ENCODE measurements at regions of chr22 and their contacts with region 1.

Region 1: DNA sequence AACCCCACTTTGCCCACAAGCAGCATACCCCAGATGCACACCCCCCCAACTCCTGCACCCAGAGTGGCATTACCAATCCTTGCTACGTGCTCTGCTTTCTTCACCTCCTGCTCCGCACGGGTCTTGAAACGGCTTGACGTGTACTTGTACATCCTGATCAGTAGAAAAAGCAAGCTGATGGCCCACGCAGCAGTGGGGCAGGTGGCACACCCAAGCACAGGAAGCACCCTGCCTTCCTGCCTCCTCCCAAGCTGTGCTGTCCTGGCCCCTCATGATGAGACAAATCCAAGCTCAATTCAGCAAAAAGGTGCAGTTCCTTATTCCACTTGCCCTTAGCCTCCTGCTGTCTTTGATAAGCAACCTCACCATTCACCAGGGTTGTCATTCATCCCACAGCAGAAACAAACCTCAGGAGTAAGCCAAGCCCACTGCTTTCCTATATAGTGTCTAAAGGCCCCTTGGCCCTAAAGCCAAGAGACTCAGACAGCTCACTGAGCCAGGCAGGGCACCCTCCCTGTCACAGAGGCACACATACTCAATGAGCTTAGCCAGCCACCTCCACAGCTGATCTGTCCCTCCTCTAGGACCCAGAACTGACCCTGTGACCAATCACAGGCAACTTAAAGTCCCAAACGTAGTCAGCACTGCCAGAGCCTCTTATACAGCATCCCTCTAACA is 27.8 kb downstream of the MORC2 start:
- DNase-seq: no peak
- ATAC-seq: no peak
- H3K4me3 ChIP-seq: no peak overlapping the region
- H3K27ac ChIP-seq: no peak overlapping the region
- H3K4me1 ChIP-seq: no peaks in the 10 kb centered on the region
- H3K27me3 ChIP-seq: no peaks in the 10 kb centered on the region
- CTCF ChIP-seq: no peak
- POLR2A ChIP-seq: no peak
- RAD21 ChIP-seq: no peak

Region 2: GRCh38 chr22:30890686-30891442 is 50.0 kb before region 1 on chr22:
- CTCF ChIA-PET with region 1: no interaction called
- POLR2A ChIA-PET with region 1: no interaction called
- dilution Hi-C with region 1: no loop called
- in situ Hi-C with region 1: no loop called
- intact Hi-C with region 1: no loop called
- DNase-seq: peak; percentile 10
- ATAC-seq: peak; percentile 97
- H3K4me3 ChIP-seq: no peak overlapping the region
- H3K27ac ChIP-seq: no peak overlapping the region
- H3K4me1 ChIP-seq: no peaks in the 10 kb centered on the region
- H3K27me3 ChIP-seq: no peaks in the 10 kb centered on the region
- CTCF ChIP-seq: peak; percentile 63
- POLR2A ChIP-seq: no peak
- RAD21 ChIP-seq: peak; percentile 63

Region 3: DNA sequence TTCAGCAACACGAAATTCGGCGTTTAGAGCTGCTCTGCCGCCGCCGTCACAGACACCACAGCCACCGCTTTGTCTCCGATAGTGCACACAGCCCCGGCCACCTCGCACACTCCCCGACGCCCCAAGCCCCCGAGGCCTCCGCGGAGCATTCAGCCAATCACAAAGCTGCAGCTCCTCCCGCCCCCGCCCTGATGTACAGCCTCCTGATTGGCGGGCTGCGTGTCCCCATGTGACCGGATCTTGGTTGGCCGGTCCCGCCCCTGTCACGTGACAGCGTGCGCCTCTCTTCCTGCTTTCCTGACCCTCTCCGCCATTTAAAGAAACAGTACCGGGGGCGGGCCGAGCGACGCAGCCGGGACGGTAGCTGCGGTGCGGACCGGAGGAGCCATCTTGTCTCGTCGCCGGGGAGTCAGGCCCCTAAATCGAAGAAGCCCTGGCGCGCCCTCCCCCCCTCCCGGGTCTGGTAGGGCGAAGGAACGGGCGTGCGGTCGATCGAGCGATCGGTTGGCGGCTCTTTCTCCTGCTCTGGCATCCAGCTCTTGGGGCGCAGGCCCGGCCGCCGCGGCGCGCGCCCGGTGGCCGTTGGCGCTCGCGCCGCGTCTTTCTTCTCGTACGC is 28.2 kb after region 1 on chr22 and contains the start of gene TUG1:
- CTCF ChIA-PET with region 1: no interaction called
- POLR2A ChIA-PET with region 1: interaction called, 14 read pairs
- dilution Hi-C with region 1: no loop called
- in situ Hi-C with region 1: no loop called
- intact Hi-C with region 1: no loop called
- DNase-seq: peak; percentile 98
- ATAC-seq: peak; percentile 95
- H3K4me3 ChIP-seq: peak within 1 kb of the TSS; percentile 68
- H3K27ac ChIP-seq: peak within 1 kb of the TSS; percentile 97
- H3K4me1 ChIP-seq: peaks cover 10% of the 10 kb centered on the region
- H3K27me3 ChIP-seq: no peaks in the 10 kb centered on the region
- CTCF ChIP-seq: no peak
- POLR2A ChIP-seq: peak; percentile 88
- RAD21 ChIP-seq: no peak
- total RNA-seq, gene TUG1: 63.3 and 68.8 TPM in 2 replicates

Region 4: DNA sequence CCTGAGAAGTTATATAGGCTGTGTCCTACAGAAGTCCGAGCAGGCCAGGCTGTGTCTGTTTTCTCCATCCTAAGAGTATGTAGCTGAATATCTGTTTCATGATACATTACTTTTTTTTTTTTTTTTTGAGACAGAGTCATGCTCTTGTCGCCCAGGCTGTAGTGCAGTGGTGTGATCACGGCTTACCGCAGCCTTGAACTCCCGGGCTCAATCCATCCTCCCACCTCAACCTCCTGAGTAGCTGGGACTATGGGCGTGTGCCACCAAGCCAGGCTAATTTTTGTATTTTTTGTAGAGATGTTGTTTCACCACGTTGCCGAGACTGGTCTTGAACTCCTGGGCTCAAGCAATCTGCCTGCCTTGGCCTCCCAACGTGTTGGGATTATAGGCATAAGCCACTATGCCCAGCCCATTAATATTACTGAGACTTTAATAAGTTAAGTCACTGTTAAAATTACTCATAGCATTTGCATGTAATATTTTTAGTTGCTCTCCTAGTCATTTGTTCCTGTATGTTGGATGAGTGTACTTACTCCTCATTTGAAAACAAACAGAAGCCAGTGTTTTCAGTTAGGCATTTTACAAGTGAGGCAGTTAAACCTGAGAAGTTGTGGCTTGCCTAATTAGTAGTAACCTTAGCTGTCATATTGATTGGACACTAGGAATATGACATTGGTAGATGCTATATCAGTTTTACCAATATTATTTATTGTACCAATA is 484.7 kb after region 1 on chr22:
- CTCF ChIA-PET with region 1: no interaction called
- POLR2A ChIA-PET with region 1: interaction called, 11 read pairs
- dilution Hi-C with region 1: no loop called
- in situ Hi-C with region 1: no loop called
- intact Hi-C with region 1: no loop called
- DNase-seq: peak; percentile 12
- ATAC-seq: peak; percentile 32
- H3K4me3 ChIP-seq: no peak overlapping the region
- H3K27ac ChIP-seq: no peak overlapping the region
- H3K4me1 ChIP-seq: no peaks in the 10 kb centered on the region; the same call in 1 of the 2 replicates
- H3K27me3 ChIP-seq: no peaks in the 10 kb centered on the region
- CTCF ChIP-seq: no peak
- POLR2A ChIP-seq: no peak
- RAD21 ChIP-seq: no peak

Measured in IMR-90 (cell line).